ENCODE measurements at regions of chrX and their contacts with region 1.

Region 1: DNA sequence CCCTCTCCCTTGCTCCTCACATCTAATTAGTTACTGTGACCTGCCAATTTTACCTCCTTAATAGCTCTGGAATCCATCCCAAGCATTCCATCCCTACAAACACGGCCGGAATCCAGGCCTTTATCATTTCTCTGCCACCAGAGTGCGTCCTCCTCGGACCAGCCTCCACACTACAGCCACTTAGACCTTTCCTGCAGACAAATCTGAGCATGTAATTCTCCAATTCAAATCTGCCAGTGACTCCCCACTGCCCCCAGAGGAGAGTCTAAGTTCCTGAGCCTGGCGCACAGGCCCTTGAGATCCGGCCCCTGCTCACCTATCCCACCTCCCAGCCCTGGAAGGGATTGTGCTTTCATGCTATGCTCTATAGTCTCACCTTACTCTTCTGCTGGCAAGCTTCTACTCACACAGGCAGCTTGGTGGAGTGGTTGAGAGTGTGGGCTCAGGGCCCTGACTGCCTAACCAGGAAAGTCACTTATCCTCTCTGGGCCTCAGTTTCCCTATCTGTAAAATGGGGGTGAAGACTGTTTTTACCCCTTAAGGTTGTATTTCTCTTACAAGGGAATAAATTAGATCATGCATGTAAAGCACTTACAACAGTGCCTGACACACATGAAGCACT is 31.2 kb downstream of the PJA1 start:
- DNase-seq: peak; percentile 59
- ATAC-seq: peak; percentile 97
- H3K4me3 ChIP-seq: no peak overlapping the region
- H3K27ac ChIP-seq: no peak overlapping the region
- H3K4me1 ChIP-seq: no peaks in the 10 kb centered on the region
- H3K27me3 ChIP-seq: no peaks in the 10 kb centered on the region
- CTCF ChIP-seq: peak; percentile 52
- EP300 ChIP-seq: no peak
- POLR2A ChIP-seq: no peak
- RAD21 ChIP-seq: no peak

Region 2: GRCh38 chrX:69060631-69061408 is 73.2 kb before region 1 on chrX:
- CTCF ChIA-PET with region 1: no interaction called
- POLR2A ChIA-PET with region 1: no interaction called
- in situ Hi-C with region 1: no loop called
- intact Hi-C with region 1: no loop called
- DNase-seq: peak; percentile 21
- ATAC-seq: peak; percentile 82
- H3K4me3 ChIP-seq: no peak overlapping the region
- H3K27ac ChIP-seq: no peak overlapping the region
- H3K4me1 ChIP-seq: no peaks in the 10 kb centered on the region
- H3K27me3 ChIP-seq: no peaks in the 10 kb centered on the region
- CTCF ChIP-seq: peak; percentile 63
- EP300 ChIP-seq: no peak
- POLR2A ChIP-seq: no peak
- RAD21 ChIP-seq: no peak

Region 3: DNA sequence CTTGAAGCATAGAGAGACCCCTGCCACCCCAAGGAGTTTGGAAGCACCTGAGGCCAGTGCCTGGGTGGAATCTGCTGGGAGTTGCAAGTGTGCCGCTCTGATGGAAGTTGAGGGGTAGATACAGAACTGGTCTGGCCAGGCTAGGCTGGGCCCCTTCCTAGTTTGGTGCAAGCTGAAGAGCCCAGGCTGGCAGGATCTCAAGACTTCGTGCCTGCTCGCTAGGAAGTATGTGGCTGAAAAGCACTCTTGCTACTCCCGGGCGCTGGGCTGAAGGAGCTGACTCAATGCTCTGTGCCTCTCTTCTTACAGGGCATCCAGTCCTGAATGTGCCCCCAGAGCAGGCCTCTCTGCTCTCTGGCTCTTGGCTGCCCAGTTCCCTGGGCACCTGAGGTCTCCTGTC is 82.9 kb after region 1 on chrX:
- CTCF ChIA-PET with region 1: interaction called, 10 read pairs
- POLR2A ChIA-PET with region 1: no interaction called
- in situ Hi-C with region 1: loop called (anchors 10 kb)
- intact Hi-C with region 1: no loop called
- DNase-seq: no peak
- ATAC-seq: no peak
- H3K4me3 ChIP-seq: no peak overlapping the region
- H3K27ac ChIP-seq: no peak overlapping the region
- H3K4me1 ChIP-seq: no peaks in the 10 kb centered on the region
- H3K27me3 ChIP-seq: no peaks in the 10 kb centered on the region
- CTCF ChIP-seq: no peak
- EP300 ChIP-seq: no peak
- POLR2A ChIP-seq: no peak
- RAD21 ChIP-seq: no peak

Region 4: DNA sequence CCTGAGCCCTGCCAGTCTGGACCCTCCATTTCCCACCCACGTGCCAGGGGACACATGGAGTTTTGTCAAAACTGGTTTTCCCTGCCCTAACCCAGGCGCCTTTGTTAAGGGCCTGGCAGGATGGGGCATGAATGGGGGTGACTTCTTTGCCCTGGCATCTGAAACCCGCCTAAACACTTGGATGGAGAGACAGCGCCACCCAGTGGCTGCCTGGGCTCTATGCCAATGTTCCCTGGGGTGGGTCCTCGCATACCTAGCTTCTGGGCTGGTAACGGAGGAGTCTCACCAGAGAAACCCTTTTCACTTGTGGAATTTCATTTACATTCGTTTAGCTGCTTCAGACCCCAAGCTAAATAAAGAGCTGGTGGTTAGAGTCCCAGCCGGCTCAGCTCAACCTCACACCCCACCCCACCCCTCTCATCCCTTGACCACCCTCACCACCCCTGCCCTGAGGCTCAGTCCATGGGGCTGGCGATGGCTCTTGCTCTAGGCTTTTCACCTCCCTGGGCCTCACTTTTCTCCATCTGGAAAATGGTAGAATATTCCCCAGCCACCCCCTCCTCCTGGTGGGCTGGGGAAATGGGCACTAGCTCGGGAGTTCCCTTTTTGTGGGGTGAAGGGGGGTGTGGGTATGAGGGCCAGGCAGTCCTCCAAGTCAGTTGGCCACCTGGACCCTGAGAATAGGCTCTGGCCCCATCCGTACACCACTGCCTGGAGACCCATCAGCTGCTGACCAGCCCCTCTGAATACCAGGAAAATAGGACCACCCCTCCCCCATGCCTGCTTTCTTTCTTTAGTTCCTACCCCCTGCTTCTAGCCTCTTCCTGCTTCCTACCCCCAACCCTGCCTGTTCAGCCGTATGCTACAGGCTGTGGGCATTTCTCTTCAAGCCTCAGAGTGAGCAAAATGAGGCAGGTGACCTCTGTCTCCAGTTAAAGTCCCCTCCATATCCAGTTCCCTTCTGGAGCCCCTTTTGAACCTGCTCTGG is 88.4 kb after region 1 on chrX:
- CTCF ChIA-PET with region 1: interaction called, 10 read pairs
- POLR2A ChIA-PET with region 1: no interaction called
- in situ Hi-C with region 1: loop called (anchors 10 kb)
- intact Hi-C with region 1: no loop called
- DNase-seq: peak; percentile 31
- ATAC-seq: peak; percentile 85
- H3K4me3 ChIP-seq: no peak overlapping the region
- H3K27ac ChIP-seq: no peak overlapping the region
- H3K4me1 ChIP-seq: no peaks in the 10 kb centered on the region
- H3K27me3 ChIP-seq: no peaks in the 10 kb centered on the region
- CTCF ChIP-seq: peak; percentile 82
- EP300 ChIP-seq: no peak
- POLR2A ChIP-seq: no peak
- RAD21 ChIP-seq: peak; percentile 78